Activated CD4-positive, alpha-beta memory T cell treated with anti-CD3 and anti-CD28 coated beads for 36 hours (primary cell): ENCODE measurements at regions of chr1 and their contacts with region 1.

Region 1: GRCh38 chr1:153775458-153776327 is 486 bp downstream of the SLC27A3 start:
- DNase-seq: peak; percentile 72
- H3K4me3 Mint-ChIP-seq: peak overlapping the region; percentile 75
- H3K27ac Mint-ChIP-seq: peak overlapping the region; percentile 42
- H3K4me1 Mint-ChIP-seq: peaks cover 12% of the 10 kb centered on the region
- H3K27me3 Mint-ChIP-seq: no peaks in the 10 kb centered on the region

Region 2: GRCh38 chr1:152654110-152654509 is 1121.6 kb before region 1 on chr1:
- CTCF ChIA-PET with region 1: no interaction called
- POLR2A ChIA-PET with region 1: no interaction called
- intact Hi-C with region 1: no loop called
- DNase-seq: peak; percentile 69
- H3K4me3 Mint-ChIP-seq: no peak overlapping the region
- H3K27ac Mint-ChIP-seq: no peak overlapping the region
- H3K4me1 Mint-ChIP-seq: peaks cover 3% of the 10 kb centered on the region
- H3K27me3 Mint-ChIP-seq: peaks cover 9% of the 10 kb centered on the region

Region 3: GRCh38 chr1:153677718-153678505 is 97.8 kb before region 1 on chr1:
- CTCF ChIA-PET with region 1: interaction called, 8 read pairs
- POLR2A ChIA-PET with region 1: no interaction called
- intact Hi-C with region 1: loop called (anchors 2 kb)
- DNase-seq: peak; percentile 65
- H3K4me3 Mint-ChIP-seq: peak overlapping the region; percentile 53
- H3K27ac Mint-ChIP-seq: no peak overlapping the region
- H3K4me1 Mint-ChIP-seq: peaks cover 19% of the 10 kb centered on the region
- H3K27me3 Mint-ChIP-seq: peaks cover 41% of the 10 kb centered on the region

Region 4: GRCh38 chr1:153717330-153717729 is 58.4 kb before region 1 on chr1:
- CTCF ChIA-PET with region 1: no interaction called
- POLR2A ChIA-PET with region 1: no interaction called
- intact Hi-C with region 1: no loop called
- DNase-seq: no peak
- H3K4me3 Mint-ChIP-seq: no peak overlapping the region
- H3K27ac Mint-ChIP-seq: no peak overlapping the region
- H3K4me1 Mint-ChIP-seq: peaks cover 10% of the 10 kb centered on the region
- H3K27me3 Mint-ChIP-seq: peaks cover 8% of the 10 kb centered on the region

Region 5: GRCh38 chr1:153727463-153728304 is 48.0 kb before region 1 on chr1 and contains the start of gene INTS3:
- CTCF ChIA-PET with region 1: no interaction called
- POLR2A ChIA-PET with region 1: interaction called, 3 read pairs
- intact Hi-C with region 1: loop called (anchors 5 kb)
- DNase-seq: peak; percentile 100
- H3K4me3 Mint-ChIP-seq: peak within 1 kb of the TSS; percentile 95
- H3K27ac Mint-ChIP-seq: peak within 1 kb of the TSS; percentile 97
- H3K4me1 Mint-ChIP-seq: peaks cover 39% of the 10 kb centered on the region
- H3K27me3 Mint-ChIP-seq: no peaks in the 10 kb centered on the region
- total RNA-seq, gene INTS3: 45.5 to 47.7 TPM

Region 6: GRCh38 chr1:153860285-153860684 is 84.6 kb after region 1 on chr1:
- CTCF ChIA-PET with region 1: no interaction called
- POLR2A ChIA-PET with region 1: no interaction called
- intact Hi-C with region 1: no loop called
- DNase-seq: no peak
- H3K4me3 Mint-ChIP-seq: no peak overlapping the region
- H3K27ac Mint-ChIP-seq: no peak overlapping the region
- H3K4me1 Mint-ChIP-seq: peaks cover 13% of the 10 kb centered on the region
- H3K27me3 Mint-ChIP-seq: no peaks in the 10 kb centered on the region